AG04449 (cell line): ENCODE measurements at regions of chr18 and their contacts with region 1.

Region 1: DNA sequence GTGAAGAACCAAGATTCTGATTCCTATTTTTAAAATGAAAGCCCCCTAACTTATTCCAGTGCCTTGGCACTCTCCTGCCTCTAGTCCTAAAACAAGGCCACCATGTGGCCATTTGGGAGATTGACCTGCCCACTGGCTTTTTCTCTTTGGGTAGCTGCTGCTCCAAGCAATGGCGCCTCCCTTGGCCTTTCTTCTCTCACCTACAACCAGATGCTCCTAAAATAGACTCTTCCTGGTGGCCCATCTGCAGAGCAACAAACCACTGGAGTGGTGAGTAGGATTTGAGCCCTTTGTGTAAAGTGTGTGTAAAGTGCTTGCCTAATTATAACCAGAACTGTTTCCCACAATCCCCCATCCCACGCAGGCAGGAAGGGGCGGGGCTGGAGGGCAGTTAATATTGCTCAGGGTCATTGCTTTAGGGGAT is 114.2 kb downstream of the FHOD3 start:
- DNase-seq: no peak
- H3K4me3 ChIP-seq: no peak overlapping the region
- CTCF ChIP-seq: peak; percentile 29

Region 2: DNA sequence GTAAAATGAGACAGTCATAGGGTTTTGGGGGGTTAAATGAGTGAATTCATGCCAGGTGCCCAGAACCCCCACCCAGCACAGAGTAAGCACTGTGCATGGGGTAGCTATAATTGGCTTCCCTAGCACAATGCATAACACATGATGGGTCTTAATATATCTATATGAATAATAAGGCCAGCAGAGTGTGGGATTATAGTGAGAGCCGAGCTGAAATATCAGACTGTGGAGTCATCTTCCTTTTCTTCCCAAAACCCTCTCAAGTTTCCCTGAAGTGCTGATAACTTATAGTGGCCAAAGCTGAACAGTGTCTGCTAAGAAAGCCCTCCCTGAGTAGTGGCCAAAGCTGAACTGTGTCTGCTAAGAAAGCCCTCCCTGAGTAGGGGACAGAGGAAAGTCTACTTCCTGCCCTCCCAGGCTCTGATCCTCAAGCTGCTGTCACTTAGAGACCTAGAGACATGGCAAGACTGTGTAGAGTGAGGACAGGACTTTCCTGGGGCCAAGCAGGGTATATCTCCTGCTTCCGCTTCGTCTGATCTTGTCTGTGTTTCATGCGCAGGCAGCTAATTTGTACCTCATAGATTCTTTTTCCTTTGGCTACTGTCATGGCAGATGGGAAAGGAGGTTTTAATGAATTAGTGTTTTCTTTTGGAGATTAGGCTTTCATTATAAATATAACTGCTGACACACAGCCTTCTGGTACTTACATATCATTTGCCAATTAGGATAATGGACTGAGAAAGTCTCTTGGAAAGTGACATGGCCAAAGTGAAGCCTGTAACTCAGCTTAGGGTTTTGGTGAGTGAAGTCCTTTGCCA is 19.4 kb before region 1 on chr18:
- CTCF ChIA-PET with region 1: interaction called, 13 read pairs
- POLR2A ChIA-PET with region 1: no interaction called
- DNase-seq: no peak
- H3K4me3 ChIP-seq: no peak overlapping the region
- CTCF ChIP-seq: no peak

Region 3: DNA sequence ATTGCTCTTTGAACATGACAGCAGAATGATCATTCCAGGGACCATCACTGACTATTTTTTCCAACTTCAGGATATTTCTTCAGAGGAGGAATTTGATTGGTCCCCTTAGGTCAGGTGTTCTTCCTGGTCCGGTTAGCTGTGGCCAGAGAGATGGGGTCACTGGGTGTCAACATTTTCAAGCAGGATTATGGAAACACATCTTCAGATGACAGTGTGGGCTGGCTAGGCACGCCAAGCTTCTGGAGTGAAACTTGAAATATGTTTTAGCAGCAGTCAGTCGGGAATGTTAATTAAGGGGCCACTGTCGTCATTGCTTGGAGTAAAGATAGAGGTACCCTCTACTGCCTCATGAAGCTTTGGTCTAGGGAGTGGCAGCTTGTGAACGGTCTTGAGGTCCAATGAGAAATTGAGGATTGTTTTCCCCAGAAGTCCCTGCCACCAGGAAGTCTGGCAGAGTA is 17.0 kb after region 1 on chr18:
- CTCF ChIA-PET with region 1: no interaction called
- POLR2A ChIA-PET with region 1: no interaction called
- DNase-seq: no peak
- H3K4me3 ChIP-seq: no peak overlapping the region
- CTCF ChIP-seq: no peak